Common myeloid progenitor, CD34-positive (primary cell): ENCODE measurements at regions of chr3 and their contacts with region 1.

Region 1: DNA sequence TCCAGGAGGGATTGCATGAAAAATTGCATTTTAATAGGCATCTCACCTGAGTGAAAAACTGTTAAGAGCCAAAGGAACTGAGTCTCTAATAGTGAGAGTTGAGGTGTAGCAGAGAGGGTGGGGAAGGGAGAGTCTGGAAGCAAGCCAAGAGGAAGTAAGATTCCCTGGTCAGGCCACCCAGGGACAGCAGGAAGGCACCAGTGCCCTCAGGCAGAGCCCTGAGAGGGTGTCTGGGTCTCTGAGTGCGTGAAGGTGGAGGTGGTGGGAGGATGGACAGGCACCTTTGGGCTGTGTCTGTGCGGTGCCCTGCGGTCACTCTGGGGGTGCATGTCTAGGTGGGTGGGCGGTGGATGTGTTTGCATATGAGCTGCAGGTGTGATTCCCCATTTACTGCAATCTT is 300.4 kb upstream of the ROPN1 start:
- DNase-seq: no peak
- H3K4me3 ChIP-seq: no peak overlapping the region
- H3K27ac ChIP-seq: no peak overlapping the region
- H3K4me1 ChIP-seq: no peaks in the 10 kb centered on the region
- H3K27me3 ChIP-seq: peaks cover 0 to 12% (median 6%) of the 10 kb centered on the region in 5 experiments

Region 2: DNA sequence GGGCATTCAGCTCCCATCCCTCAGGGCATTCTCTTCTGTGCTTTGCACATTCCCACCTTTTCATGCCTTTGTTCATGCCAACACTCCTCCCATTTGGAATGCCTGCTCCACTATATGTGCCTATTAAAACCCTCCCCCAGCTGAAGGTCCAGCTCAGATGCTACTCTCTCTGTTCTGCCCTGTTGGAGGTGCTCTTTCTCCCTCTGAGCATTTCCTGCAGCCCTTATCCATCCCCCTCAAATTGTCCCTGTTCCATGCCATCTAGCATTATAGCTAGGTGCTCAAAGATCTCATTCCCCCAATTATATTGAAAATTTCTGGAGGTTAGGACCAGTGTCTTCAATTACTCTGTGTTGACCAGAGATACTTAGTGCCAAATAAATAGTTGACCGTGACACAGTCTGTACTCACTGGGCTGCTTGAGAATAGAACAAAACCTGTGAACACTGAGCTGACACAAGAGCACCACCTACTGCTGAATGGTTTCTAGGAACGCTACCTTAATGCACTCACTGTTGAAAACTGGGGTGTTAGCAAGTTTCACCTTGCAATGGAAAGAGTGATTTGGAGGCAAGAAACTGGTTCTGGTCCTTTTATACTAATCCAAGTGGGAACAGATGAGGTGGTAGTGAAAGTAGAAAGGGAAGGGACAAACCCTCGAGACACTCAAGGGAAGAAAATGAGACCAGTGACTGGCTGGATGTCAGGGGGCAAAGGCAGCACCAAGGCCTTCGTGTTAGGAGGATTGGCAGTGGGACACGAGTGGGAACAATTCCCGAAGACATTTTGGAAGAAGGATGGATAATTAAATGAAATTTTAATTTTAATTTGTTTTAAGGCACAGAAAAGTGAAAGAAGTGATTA is 10.6 kb before region 1 on chr3:
- CTCF ChIA-PET with region 1: interaction called, 10 read pairs
- POLR2A ChIA-PET with region 1: no interaction called
- DNase-seq: peak; percentile 26 to 54 (median 38)
- H3K4me3 ChIP-seq: no peak overlapping the region
- H3K27ac ChIP-seq: no peak overlapping the region
- H3K4me1 ChIP-seq: no peaks in the 10 kb centered on the region
- H3K27me3 ChIP-seq: peaks cover 0 to 21% (median 9%) of the 10 kb centered on the region in 5 experiments

Region 3: GRCh38 chr3:124669470-124669869 is 377.1 kb after region 1 on chr3:
- CTCF ChIA-PET with region 1: no interaction called
- POLR2A ChIA-PET with region 1: no interaction called
- DNase-seq: no peak
- H3K4me3 ChIP-seq: no peak overlapping the region
- H3K27ac ChIP-seq: no peak overlapping the region
- H3K4me1 ChIP-seq: peaks cover 0 to 16% (median 2%) of the 10 kb centered on the region in 4 experiments
- H3K27me3 ChIP-seq: no peaks in the 10 kb centered on the region